ENCODE measurements at regions of chr15 and their contacts with region 1.

Region 1: DNA sequence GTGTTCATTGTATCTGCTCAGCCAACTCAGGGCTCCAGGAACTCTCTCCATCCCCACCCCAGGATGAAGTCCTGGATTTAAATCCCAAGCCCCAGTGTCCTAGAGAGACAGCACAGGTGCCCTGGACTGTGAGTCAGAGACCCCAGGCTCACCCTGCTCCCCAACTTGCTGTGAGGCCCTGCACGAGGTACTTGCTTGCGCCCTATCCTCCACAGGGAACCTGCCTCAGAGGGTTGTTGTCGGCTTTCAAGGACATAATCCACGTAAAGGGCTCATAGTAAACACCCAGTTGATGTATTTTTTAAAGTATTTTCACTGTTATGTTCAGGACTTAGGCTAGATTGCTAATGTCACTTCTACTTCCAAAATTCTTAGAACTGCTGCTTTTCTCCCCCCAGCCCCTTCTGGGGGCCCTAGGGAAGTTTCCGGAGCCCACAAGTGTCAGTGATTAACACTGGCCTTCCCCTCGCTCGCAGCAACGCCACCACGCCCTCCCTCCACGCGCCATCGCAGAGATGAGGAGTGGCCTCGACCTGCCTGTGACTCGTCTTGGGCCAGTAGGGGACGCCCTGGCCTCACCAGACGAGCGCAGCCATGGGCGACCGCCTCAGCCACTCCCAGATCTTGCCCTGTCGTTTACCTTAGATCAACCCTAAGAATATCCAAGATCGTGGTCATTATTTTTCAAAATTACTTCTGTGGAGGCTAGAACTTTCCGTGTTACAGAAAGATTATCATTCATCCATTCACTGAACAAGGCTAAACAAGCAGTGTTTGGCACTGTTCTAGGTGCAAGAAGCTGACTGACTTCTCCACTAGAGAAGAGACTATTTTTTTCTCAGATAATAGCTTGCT is 6.0 kb upstream of the SRP14 start:
- DNase-seq: peak; percentile 77
- ATAC-seq: peak; percentile 87
- H3K4me3 Mint-ChIP-seq: peak overlapping the region; percentile 46
- H3K27ac Mint-ChIP-seq: peak overlapping the region; percentile 93
- H3K4me1 Mint-ChIP-seq: peaks cover 64% of the 10 kb centered on the region
- H3K27me3 Mint-ChIP-seq: no peaks in the 10 kb centered on the region
- CTCF ChIP-seq: peak; percentile 58

Region 2: DNA sequence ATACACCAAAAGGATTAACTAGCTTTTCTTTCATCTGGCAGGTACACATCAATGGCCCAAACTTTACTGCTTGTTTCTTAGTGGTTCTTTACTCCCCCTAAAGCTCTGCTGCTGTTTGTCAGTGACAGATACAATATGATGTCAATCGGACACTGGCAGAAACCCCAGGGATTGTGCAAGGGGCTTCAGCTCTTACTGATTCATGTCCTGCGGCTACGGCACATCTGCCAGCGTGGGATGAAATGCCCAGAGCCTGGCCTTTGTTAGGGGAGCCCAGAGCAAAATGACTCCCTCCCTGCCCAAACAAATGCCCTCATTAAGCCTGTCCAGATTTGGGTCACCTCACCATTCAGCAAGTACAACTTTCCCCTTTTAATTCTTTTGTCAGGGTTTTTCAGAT is 34.3 kb before region 1 on chr15:
- CTCF ChIA-PET with region 1: no interaction called
- POLR2A ChIA-PET with region 1: no interaction called
- intact Hi-C with region 1: no loop called
- DNase-seq: no peak
- ATAC-seq: no peak
- H3K4me3 Mint-ChIP-seq: no peak overlapping the region
- H3K27ac Mint-ChIP-seq: no peak overlapping the region
- H3K4me1 Mint-ChIP-seq: no peaks in the 10 kb centered on the region
- H3K27me3 Mint-ChIP-seq: no peaks in the 10 kb centered on the region
- CTCF ChIP-seq: no peak

Region 3: DNA sequence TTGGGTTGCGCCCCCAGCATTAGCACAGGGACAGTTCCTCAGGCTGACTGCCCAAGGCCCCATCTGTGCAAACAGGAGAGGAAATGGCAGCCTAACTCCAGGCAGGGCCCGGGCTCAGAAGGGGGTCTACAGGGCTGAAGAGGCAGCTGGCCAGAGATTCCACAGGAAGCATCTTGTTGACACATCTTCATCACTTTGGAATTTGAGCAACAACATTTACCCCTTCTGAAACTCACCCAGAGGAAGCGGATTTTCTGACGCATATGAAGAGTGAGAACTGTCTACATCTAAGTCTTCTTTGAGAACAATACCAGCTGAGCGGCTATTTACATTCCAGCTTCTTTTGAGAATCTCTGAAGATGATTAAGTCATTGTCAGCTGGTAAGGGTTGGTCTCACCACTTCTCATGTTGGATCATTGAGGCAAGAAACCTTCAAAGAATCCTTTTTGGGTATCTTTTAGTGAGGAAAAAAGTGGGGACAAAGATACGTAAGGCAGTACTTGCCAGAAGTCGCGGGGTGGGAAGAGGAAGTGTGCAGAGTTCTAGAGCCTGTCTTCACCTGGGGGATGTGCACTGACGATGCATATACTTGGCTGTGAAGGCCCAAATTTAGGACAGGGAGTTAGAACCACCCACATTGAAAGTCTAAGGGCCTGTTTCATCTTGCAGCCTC is 19.4 kb after region 1 on chr15:
- CTCF ChIA-PET with region 1: interaction called, 13 read pairs
- POLR2A ChIA-PET with region 1: interaction called, 56 read pairs
- intact Hi-C with region 1: loop called (anchors 1 kb)
- DNase-seq: no peak
- ATAC-seq: peak; percentile 48
- H3K4me3 Mint-ChIP-seq: peak overlapping the region; percentile 5
- H3K27ac Mint-ChIP-seq: peak overlapping the region; percentile 82
- H3K4me1 Mint-ChIP-seq: peaks cover 39% of the 10 kb centered on the region
- H3K27me3 Mint-ChIP-seq: no peaks in the 10 kb centered on the region
- CTCF ChIP-seq: no peak

Region 4: DNA sequence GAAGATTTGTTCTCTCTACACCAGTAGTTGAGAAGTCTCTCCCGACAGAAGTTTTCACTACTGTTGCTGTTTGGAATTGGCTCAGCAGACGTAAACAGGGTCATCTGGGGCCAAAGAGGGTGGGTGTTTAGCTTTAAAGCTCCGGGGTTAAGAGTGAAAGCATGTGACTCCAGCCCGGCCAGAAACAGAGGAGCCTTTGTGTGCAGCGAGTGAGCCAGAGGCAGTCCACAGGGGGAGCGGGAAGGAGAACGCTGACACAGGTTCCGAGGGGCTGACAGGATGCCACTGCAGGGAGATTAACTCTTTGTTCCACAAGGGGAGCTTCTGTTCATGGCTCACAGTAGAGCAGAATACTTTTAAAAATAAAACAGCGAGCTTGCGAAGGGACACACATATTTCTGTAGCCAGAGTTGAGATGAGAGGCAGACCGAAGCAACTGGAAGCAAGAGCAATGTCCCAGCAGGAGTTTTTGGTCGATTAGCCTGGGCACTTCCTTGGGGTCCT is 36.8 kb after region 1 on chr15:
- CTCF ChIA-PET with region 1: interaction called, 7 read pairs
- POLR2A ChIA-PET with region 1: interaction called, 49 read pairs
- intact Hi-C with region 1: loop called (anchors 1 kb)
- DNase-seq: no peak
- ATAC-seq: no peak
- H3K4me3 Mint-ChIP-seq: peak overlapping the region; percentile 78
- H3K27ac Mint-ChIP-seq: peak overlapping the region; percentile 89
- H3K4me1 Mint-ChIP-seq: peaks cover 60% of the 10 kb centered on the region
- H3K27me3 Mint-ChIP-seq: no peaks in the 10 kb centered on the region
- CTCF ChIP-seq: no peak

Region 5: DNA sequence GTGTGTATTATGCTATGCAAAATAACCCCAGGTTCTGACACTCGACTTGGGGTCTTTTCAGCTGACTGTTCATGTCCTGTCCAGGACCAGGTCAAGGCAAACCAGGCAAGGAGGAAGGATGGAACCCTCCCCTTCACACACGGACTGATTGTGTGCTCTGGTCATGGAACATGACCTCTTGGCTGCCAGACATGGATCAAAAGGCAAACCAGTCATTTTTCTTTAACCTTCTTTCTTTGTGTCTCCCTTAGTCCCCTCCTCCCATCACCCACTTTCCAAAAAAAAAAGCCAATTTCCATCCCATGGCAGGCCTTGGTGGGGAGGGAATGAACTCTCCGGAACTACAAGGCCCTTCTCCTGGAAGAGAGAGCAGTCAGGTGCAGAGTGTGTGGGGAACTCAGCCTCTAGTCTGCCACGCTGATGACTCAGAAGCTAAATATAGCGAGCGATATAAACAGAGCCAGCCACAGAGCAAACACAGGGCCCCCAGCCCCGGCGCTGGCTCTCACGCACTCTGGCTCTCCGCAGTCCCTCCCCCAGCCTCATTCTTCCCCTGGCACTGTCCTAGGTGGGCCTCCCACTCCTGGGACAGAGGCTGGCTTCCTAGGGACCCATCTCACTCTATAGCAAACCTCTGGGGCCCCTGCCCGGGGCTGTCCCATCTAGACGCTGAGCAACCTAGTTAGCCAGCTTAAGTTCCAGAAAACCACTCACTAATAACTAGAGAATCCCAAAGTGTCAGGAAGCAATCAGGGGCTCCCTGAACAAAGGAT is 53.7 kb after region 1 on chr15:
- CTCF ChIA-PET with region 1: interaction called, 519 read pairs
- POLR2A ChIA-PET with region 1: interaction called, 1,329 read pairs
- intact Hi-C with region 1: loop called (anchors 1 kb)
- DNase-seq: peak; percentile 74
- ATAC-seq: peak; percentile 78
- H3K4me3 Mint-ChIP-seq: peak overlapping the region; percentile 77
- H3K27ac Mint-ChIP-seq: peak overlapping the region; percentile 99
- H3K4me1 Mint-ChIP-seq: peaks cover 98% of the 10 kb centered on the region
- H3K27me3 Mint-ChIP-seq: no peaks in the 10 kb centered on the region
- CTCF ChIP-seq: no peak

Region 6: GRCh38 chr15:40160689-40161688 is 116.0 kb after region 1 on chr15 and contains the start of gene BUB1B:
- CTCF ChIA-PET with region 1: interaction called, 6 read pairs
- POLR2A ChIA-PET with region 1: interaction called, 3 read pairs
- intact Hi-C with region 1: loop called (anchors 1 kb)
- DNase-seq: peak; percentile 88
- ATAC-seq: peak; percentile 97
- H3K4me3 Mint-ChIP-seq: no peak within 1 kb of the TSS
- H3K27ac Mint-ChIP-seq: no peak within 1 kb of the TSS
- H3K4me1 Mint-ChIP-seq: peaks cover 10% of the 10 kb centered on the region
- H3K27me3 Mint-ChIP-seq: no peaks in the 10 kb centered on the region
- CTCF ChIP-seq: no peak
- total RNA-seq, gene BUB1B: 3.9 and 4.2 TPM in 2 replicates

Region 7: GRCh38 chr15:40217159-40217824 is 172.3 kb after region 1 on chr15:
- CTCF ChIA-PET with region 1: interaction called, 77 read pairs
- POLR2A ChIA-PET with region 1: interaction called, 7 read pairs
- intact Hi-C with region 1: loop called (anchors 1 kb)
- DNase-seq: no peak
- ATAC-seq: peak; percentile 100
- H3K4me3 Mint-ChIP-seq: no peak overlapping the region
- H3K27ac Mint-ChIP-seq: no peak overlapping the region
- H3K4me1 Mint-ChIP-seq: no peaks in the 10 kb centered on the region
- H3K27me3 Mint-ChIP-seq: no peaks in the 10 kb centered on the region
- CTCF ChIP-seq: peak; percentile 41

Region 8: DNA sequence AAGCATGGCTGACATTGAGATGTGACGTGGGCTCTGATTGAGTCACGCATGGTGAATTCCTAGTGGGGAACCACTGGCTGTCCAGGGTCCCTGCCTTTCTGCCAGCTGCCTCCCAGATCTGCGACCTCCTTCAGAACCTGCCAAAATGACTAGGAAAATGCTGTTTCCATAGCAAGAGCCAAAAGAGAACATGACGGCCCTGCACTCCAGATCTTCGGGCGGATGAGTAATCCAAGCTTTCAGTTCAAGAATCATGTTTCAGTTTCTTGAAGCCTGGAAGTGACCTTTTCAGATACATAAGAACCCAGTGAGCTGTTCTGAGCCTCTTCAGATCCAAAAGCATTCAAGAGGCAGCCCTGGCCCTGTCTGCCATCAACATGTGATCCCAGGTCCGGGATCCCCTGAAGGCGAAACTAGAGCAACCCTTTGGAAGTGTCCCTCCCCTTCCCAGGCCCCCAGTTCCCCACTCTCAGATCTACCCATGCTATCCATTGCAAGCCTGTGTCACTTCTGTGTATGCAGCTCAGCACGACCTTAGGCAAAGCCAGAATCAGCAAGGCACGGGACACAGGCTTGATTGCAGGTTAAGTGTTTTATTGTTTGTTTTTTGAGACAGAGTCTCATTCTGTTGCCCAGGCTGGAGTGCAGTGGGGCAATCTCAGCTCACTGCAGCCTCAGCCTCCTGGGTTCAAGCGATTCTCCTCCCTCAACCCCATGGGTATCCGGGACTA is 218.2 kb after region 1 on chr15:
- CTCF ChIA-PET with region 1: no interaction called
- POLR2A ChIA-PET with region 1: no interaction called
- intact Hi-C with region 1: no loop called
- DNase-seq: no peak
- ATAC-seq: no peak
- H3K4me3 Mint-ChIP-seq: no peak overlapping the region
- H3K27ac Mint-ChIP-seq: no peak overlapping the region
- H3K4me1 Mint-ChIP-seq: no peaks in the 10 kb centered on the region
- H3K27me3 Mint-ChIP-seq: no peaks in the 10 kb centered on the region
- CTCF ChIP-seq: no peak

Region 9: DNA sequence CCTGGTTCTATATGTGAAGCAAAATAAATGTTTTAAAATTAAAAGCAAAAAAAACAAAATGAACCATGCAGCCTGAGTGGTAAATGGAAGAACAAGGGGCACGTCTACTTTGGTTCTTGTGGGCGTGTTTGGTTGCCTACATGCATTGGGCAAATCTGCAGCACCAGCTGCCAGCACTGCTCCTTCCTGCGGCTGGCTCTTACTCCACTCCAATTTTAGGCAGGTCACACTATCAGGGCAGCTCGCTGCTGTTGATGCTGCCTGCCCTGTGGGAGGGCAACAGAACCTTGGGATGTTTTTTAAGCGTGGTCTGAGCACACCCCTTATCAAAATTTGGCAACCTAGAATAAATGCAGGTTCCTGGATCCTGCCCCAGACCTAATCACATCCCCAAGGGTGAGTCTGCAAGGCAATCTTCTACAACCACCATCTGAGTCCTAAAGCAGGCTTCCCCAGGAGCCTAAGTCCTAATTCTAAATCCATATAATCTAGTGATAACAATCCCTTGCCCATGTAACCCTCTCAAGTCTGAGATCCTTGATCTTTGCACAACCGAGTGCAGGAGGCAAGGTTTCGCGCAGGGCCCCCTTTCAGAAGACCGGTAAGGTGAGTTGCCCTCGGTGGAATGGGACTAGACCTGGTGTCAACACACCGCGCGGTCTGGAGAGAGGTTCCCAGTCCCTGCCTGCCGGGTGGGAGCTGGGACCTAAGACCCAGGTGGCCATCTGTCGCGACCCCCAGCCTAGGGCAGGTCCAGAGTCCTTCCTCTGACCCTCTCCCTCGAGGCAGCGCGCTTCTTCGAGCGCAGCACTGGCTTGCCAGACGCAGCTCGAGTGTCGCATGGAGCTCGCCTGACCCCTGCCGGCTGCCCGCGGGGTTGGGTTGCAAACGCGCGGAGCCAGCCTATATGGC is 376.6 kb after region 1 on chr15:
- CTCF ChIA-PET with region 1: no interaction called
- POLR2A ChIA-PET with region 1: no interaction called
- intact Hi-C with region 1: loop called (anchors 10 kb)
- DNase-seq: peak; percentile 77
- ATAC-seq: peak; percentile 97
- H3K4me3 Mint-ChIP-seq: no peak overlapping the region
- H3K27ac Mint-ChIP-seq: no peak overlapping the region
- H3K4me1 Mint-ChIP-seq: peaks cover 2% of the 10 kb centered on the region
- H3K27me3 Mint-ChIP-seq: no peaks in the 10 kb centered on the region
- CTCF ChIP-seq: peak; percentile 86

Region 10: DNA sequence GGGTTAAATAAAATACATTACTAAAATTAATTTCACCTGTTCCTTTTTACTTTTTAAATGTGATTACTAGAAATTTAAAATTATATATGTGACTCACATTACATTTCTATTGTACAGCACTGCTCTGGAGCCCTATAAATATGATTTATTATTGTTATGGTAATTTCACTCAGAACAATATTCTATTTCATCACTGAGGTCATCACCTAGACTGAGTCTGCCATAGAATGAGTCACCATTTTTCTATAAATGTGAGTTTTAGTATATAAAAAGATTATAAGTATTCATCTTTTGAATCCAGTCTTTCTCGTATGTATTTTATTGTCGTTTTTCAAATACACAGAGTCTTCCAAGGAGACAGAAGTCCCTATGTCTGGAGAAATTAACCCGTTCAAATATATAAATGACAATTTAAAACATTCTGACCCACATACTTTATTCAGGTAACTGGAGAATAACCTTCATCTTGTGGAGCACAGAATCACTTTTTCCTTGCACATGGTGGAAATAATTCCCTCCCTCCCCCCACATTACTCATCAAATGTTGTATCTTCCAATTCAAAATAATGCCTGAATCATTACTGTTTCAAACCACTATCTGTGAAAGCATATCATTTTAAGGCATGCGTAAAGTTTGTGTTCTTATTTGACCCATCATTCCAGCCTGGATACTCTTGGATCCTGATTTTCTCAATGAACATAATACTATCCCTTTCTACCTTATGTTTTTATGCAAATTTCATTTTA is 455.8 kb after region 1 on chr15:
- CTCF ChIA-PET with region 1: no interaction called
- POLR2A ChIA-PET with region 1: no interaction called
- intact Hi-C with region 1: no loop called
- DNase-seq: no peak
- ATAC-seq: no peak
- H3K4me3 Mint-ChIP-seq: no peak overlapping the region
- H3K27ac Mint-ChIP-seq: no peak overlapping the region
- H3K4me1 Mint-ChIP-seq: no peaks in the 10 kb centered on the region
- H3K27me3 Mint-ChIP-seq: peaks cover 36% of the 10 kb centered on the region
- CTCF ChIP-seq: no peak

Region 11: DNA sequence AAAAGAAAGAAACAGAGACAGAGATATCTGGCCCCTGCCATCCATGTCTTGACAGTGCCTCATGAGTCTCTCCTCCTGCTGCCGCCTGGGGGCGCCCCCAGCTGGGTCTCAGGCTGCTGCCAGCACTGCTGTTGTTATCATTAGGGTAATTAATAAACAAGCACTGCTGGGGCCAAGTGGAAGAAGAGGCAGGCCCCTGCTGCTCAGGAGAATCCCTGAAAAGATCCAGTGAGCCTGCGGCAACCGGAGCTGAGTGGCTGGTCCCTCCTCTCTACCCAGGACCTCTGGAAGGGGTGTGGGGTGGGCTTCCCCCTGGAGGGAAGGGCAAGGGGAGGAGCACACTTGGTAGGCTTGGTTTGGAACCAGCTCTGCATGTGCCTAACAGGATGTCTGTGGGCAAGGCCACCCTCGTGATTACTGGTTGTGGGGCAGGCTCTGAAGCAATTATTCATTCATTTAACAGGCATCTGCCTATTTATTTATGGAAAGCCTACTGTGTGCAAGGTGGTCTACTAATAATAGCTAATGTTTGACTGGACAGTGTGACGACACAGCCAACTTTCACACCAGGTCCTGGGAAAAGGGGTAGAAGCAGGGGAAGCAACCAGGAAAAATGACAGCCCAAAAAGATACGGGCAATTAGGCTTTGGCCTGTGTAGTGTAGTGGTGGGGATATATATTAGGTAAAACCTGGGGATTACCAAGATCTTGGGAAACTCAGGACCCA is 1512.9 kb after region 1 on chr15:
- CTCF ChIA-PET with region 1: no interaction called
- POLR2A ChIA-PET with region 1: no interaction called
- intact Hi-C with region 1: no loop called
- DNase-seq: peak; percentile 39
- ATAC-seq: peak; percentile 73
- H3K4me3 Mint-ChIP-seq: peak overlapping the region; percentile 90
- H3K27ac Mint-ChIP-seq: peak overlapping the region; percentile 59
- H3K4me1 Mint-ChIP-seq: peaks cover 26% of the 10 kb centered on the region
- H3K27me3 Mint-ChIP-seq: peaks cover 40% of the 10 kb centered on the region
- CTCF ChIP-seq: no peak

Measured in activated B cell treated with CpG ODN at 0.5 μM for 24 hours (primary cell).